ENCODE measurements at regions of chr12 and their contacts with region 1.

Region 1: DNA sequence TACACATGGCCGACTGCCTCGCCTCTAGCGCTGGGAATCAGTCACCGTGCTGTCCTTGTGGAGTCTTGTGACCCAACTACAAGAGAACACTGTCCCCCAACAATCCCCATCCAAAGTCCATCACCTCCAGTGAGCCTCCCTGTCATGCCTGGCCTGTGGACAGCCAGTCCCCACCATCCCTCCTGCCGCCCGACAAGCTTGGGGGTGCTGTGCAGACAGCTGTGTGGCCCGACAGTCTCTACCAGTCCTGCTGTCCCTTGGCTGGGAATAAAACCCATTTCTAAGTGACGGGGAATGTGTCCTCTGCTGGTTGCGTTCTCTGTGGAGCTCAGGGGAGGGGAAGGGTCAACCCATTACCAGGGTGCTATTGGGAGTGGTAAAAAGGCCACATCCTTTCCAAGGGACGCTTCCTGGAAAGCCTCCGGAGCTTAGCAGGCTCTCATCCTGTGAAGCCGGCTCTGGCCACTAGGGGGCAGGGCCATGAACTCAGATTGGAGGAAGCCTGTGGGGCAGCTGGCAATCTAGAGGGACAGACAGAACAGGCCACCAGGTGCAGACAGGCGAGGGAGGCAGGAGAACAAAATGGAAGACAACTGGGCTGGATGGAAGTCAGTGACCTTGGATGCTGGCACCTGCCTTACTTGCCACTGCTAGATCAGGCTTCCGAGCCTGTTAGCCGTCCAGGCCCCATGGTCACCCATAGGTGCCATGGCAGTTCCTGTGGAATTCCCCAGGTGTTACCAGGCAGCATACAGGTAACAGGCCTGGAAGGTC is 12.0 kb upstream of the BLTP3B start:
- DNase-seq: peak; percentile 79 to 98
- H3K4me3 ChIP-seq: no peak overlapping the region
- H3K27ac ChIP-seq: no peak overlapping the region
- H3K4me1 ChIP-seq: peaks cover 0 to 20% (median 9%) of the 10 kb centered on the region in 4 experiments; a peak in 6 of 7 replicates
- H3K27me3 ChIP-seq: no peaks in the 10 kb centered on the region
- CTCF ChIP-seq: peak; percentile 83 to 99 (median 90)
- EP300 ChIP-seq: no peak
- POLR2A ChIP-seq: no peak
- RAD21 ChIP-seq: peak; percentile 57 to 73

Region 2: DNA sequence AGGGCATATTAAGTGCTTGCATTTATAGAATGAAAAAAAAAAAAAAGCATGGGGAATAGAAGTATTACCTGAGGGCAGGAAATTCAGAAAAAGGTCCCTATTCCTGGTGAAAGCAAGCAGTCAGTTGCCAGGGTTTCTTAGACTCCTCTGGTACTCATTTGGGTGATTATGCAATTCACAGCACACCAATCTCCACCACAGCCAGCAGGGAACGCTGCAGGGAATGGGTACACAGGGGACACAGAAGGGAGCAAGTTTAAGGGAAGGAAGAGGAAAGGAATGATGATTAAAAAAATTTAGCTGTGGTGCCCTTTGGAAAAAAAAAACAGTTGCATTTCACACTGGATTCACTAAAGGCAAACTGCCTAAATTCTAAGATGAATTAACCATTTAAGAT is 26.2 kb before region 1 on chr12:
- CTCF ChIA-PET with region 1: interaction called, 11 read pairs
- POLR2A ChIA-PET with region 1: interaction called, 3 read pairs
- DNase-seq: no peak
- H3K4me3 ChIP-seq: no peak overlapping the region
- H3K27ac ChIP-seq: no peak overlapping the region
- H3K4me1 ChIP-seq: peaks cover 0 to 2% (median 1%) of the 10 kb centered on the region in 4 experiments; a peak in 1 of 7 replicates
- H3K27me3 ChIP-seq: no peaks in the 10 kb centered on the region
- CTCF ChIP-seq: peak; percentile 52 to 68 (median 66)
- EP300 ChIP-seq: no peak
- POLR2A ChIP-seq: no peak
- RAD21 ChIP-seq: peak; percentile 58 to 64

Region 3: GRCh38 chr12:100138048-100138802 is 16.4 kb before region 1 on chr12:
- CTCF ChIA-PET with region 1: interaction called, 19 read pairs
- POLR2A ChIA-PET with region 1: interaction called, 4 read pairs
- DNase-seq: no peak
- H3K4me3 ChIP-seq: no peak overlapping the region
- H3K27ac ChIP-seq: no peak overlapping the region
- H3K4me1 ChIP-seq: peaks cover 2 to 5% (median 2%) of the 10 kb centered on the region in 4 experiments; a peak in 3 of 7 replicates
- H3K27me3 ChIP-seq: no peaks in the 10 kb centered on the region
- CTCF ChIP-seq: no peak
- EP300 ChIP-seq: no peak
- POLR2A ChIP-seq: no peak
- RAD21 ChIP-seq: peak; percentile 30 to 32; a peak in 2 of 4 replicates

Region 4: GRCh38 chr12:100170313-100170858 is 15.7 kb after region 1 on chr12:
- CTCF ChIA-PET with region 1: interaction called, 50 read pairs
- POLR2A ChIA-PET with region 1: interaction called, 9 read pairs
- DNase-seq: no peak
- H3K4me3 ChIP-seq: no peak overlapping the region
- H3K27ac ChIP-seq: no peak overlapping the region
- H3K4me1 ChIP-seq: no peaks in the 10 kb centered on the region
- H3K27me3 ChIP-seq: no peaks in the 10 kb centered on the region
- CTCF ChIP-seq: peak; percentile 12 to 21 (median 16); a peak in 2 of 4 replicates
- EP300 ChIP-seq: no peak
- POLR2A ChIP-seq: no peak
- RAD21 ChIP-seq: peak in 1 of 2 experiments; percentile 34; a peak in 2 of 4 replicates

Region 5: DNA sequence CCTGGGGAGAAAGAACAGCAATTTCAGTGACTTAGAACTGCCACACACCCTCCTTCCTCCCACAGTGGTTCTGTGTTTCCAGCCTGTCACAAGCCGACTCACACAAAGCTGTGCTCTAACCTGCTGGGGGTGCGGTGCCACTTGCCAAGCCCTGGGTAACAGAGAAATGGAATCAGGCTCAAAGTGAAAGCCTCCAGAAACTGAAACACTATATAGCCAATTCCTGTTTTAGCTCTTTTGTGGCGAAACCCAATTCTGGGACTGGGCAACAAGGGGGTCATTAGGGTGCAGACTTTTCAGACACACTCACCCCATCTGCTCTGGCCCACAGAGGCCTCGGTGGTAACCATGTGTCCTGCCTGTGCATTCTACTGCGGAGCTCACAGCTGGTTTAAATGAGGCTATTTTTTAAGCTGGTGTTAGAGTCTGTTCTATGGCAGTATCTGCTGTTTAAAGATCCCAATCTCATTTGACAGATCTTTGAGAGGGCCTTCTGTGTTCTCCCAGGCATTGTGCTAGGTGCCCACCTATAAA is 30.8 kb after region 1 on chr12:
- CTCF ChIA-PET with region 1: interaction called, 15 read pairs
- POLR2A ChIA-PET with region 1: no interaction called
- DNase-seq: no peak
- H3K4me3 ChIP-seq: no peak overlapping the region
- H3K27ac ChIP-seq: no peak overlapping the region; the same call in 1 of the 2 replicates
- H3K4me1 ChIP-seq: peaks cover 0 to 2% (median 0%) of the 10 kb centered on the region in 4 experiments; a peak in 2 of 7 replicates
- H3K27me3 ChIP-seq: no peaks in the 10 kb centered on the region
- CTCF ChIP-seq: no peak
- EP300 ChIP-seq: no peak
- POLR2A ChIP-seq: no peak
- RAD21 ChIP-seq: no peak

Region 6: GRCh38 chr12:100193085-100193484 is 38.4 kb after region 1 on chr12:
- CTCF ChIA-PET with region 1: interaction called, 29 read pairs
- POLR2A ChIA-PET with region 1: interaction called, 4 read pairs
- DNase-seq: no peak
- H3K4me3 ChIP-seq: no peak overlapping the region
- H3K27ac ChIP-seq: no peak overlapping the region
- H3K4me1 ChIP-seq: no peaks in the 10 kb centered on the region
- H3K27me3 ChIP-seq: no peaks in the 10 kb centered on the region
- CTCF ChIP-seq: no peak
- EP300 ChIP-seq: no peak
- POLR2A ChIP-seq: no peak
- RAD21 ChIP-seq: no peak

Region 7: DNA sequence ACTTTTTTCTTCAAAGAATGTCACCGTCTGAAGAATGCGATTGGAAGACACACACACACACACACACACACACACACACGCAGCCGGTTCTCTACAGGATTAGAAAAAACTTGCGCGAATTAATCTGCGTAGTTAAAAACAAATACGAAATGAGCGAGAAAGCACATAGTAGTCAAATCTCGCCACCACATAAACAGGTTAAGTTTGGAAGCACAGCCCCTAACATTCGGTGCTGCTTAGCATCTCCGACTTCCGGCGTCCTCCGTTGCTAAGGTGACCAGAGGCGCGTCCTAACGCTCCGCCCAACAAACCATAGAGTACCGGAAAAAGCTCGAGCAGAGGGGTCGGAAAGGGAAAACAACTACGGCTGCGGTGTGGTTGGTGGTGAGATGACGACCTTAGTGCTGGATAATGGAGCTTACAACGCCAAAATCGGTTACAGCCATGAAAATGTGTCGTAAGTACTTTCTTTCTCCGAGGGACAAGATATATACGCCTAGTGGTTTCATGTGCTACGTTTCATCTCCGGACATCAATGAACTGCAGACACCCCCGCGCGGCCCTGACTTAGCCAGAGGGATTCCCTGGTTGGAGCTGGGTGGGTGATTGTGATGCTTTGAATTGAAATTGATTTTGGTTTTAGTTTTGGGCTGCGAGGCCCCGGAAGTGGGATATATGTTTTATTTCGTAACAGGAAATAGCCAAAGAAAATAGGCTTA is 46.0 kb after region 1 on chr12 and contains the start of gene ACTR6:
- CTCF ChIA-PET with region 1: interaction called, 29 read pairs
- POLR2A ChIA-PET with region 1: interaction called, 6 read pairs
- DNase-seq: peak; percentile 80 to 94
- H3K4me3 ChIP-seq: peak within 1 kb of the TSS; percentile 77 to 99 (median 94)
- H3K27ac ChIP-seq: peak within 1 kb of the TSS; percentile 49; the same call in 1 of the 2 replicates
- H3K4me1 ChIP-seq: peaks cover 0 to 3% (median 0%) of the 10 kb centered on the region in 4 experiments; a peak in 2 of 7 replicates
- H3K27me3 ChIP-seq: no peaks in the 10 kb centered on the region
- CTCF ChIP-seq: no peak
- EP300 ChIP-seq: 0 out of 3 replicates have a peak, but pooled peaks of 1 of the 2 experiments have one; percentile 56
- POLR2A ChIP-seq: peak; percentile 67 to 93
- RAD21 ChIP-seq: no peak
- total RNA-seq, gene ACTR6: 36.8 and 38.1 TPM in 2 replicates